H1 (cell line): ENCODE measurements at regions of chr6 and their contacts with region 1.

Region 1: GRCh38 chr6:32413427-32414047 is 6.6 kb upstream of the BTNL2 start:
- DNase-seq: peak; percentile 86 to 91
- H3K4me3 ChIP-seq: no peak overlapping the region
- H3K27ac ChIP-seq: no peak overlapping the region
- H3K4me1 ChIP-seq: no peaks in the 10 kb centered on the region
- H3K27me3 ChIP-seq: peaks cover 0 to 12% (median 1%) of the 10 kb centered on the region in 4 experiments; a peak in 1 of 7 replicates
- CTCF ChIP-seq: peak; percentile 89 to 97 (median 94)
- EP300 ChIP-seq: no peak
- POLR2A ChIP-seq: no peak
- RAD21 ChIP-seq: peak; percentile 91 to 94

Region 2: DNA sequence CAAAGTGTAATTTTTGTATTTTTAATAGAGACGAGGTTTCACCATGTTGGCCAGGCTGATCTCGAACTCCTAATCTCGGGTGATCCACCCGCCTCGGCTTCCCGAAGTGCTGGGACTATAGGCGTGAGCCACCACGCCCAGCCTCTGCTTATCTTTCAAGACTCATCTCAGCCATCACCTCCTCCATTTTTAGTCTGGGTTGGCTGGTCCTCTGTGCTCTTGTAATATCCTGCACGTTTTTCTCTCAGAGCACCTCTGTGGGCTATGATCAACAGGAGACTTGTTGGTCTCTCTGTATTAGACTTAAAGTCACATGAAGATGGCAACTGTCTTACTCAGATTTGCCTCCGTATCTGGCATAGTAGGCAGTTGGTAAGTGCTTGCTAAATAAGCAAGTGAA is 197.3 kb before region 1 on chr6:
- CTCF ChIA-PET with region 1: no interaction called
- POLR2A ChIA-PET with region 1: no interaction called
- DNase-seq: no peak
- H3K4me3 ChIP-seq: no peak overlapping the region
- H3K27ac ChIP-seq: no peak overlapping the region
- H3K4me1 ChIP-seq: no peaks in the 10 kb centered on the region
- H3K27me3 ChIP-seq: no peaks in the 10 kb centered on the region
- CTCF ChIP-seq: no peak
- EP300 ChIP-seq: no peak
- POLR2A ChIP-seq: no peak
- RAD21 ChIP-seq: no peak

Region 3: GRCh38 chr6:32244946-32245398 is 168.6 kb before region 1 on chr6:
- CTCF ChIA-PET with region 1: interaction called, 51 read pairs
- POLR2A ChIA-PET with region 1: no interaction called
- DNase-seq: peak; percentile 17 to 93
- H3K4me3 ChIP-seq: peak overlapping the region in 1 of 4 experiments; percentile 37; a peak in 2 of 8 replicates
- H3K27ac ChIP-seq: no peak overlapping the region
- H3K4me1 ChIP-seq: no peaks in the 10 kb centered on the region
- H3K27me3 ChIP-seq: no peaks in the 10 kb centered on the region
- CTCF ChIP-seq: peak; percentile 85 to 91 (median 90)
- EP300 ChIP-seq: no peak
- POLR2A ChIP-seq: no peak
- RAD21 ChIP-seq: peak; percentile 87 to 90

Region 4: DNA sequence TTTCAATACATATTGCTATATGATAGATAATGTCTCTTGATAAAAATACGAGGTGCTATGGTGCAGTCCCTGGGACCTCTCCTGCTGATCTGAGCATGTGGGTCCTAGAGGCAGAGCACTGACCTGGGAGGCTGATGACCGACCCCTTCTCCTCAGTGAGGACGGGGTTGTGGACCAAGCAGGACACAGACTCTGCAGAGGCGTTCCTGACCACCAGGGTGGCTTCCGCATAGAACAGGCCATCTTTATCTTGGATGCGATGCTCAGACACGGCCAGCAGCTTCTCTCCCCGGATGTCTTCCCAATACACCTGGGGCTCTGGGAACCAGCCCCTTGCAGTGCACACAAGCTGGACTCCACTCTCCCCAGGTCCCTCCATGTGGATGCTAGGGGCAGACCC is 10.7 kb before region 1 on chr6:
- CTCF ChIA-PET with region 1: interaction called, 43 read pairs
- POLR2A ChIA-PET with region 1: no interaction called
- DNase-seq: no peak
- H3K4me3 ChIP-seq: no peak overlapping the region
- H3K27ac ChIP-seq: no peak overlapping the region
- H3K4me1 ChIP-seq: peaks cover 0 to 6% (median 2%) of the 10 kb centered on the region in 4 experiments; a peak in 3 of 7 replicates
- H3K27me3 ChIP-seq: no peaks in the 10 kb centered on the region
- CTCF ChIP-seq: peak; percentile 1 to 23 (median 10); a peak in 3 of 4 replicates
- EP300 ChIP-seq: no peak
- POLR2A ChIP-seq: no peak
- RAD21 ChIP-seq: no peak

Region 5: GRCh38 chr6:32692019-32692418 is 278.5 kb after region 1 on chr6:
- CTCF ChIA-PET with region 1: interaction called, 26 read pairs
- POLR2A ChIA-PET with region 1: no interaction called
- DNase-seq: peak in 1 of 2 experiments; percentile 2
- H3K4me3 ChIP-seq: no peak overlapping the region
- H3K27ac ChIP-seq: no peak overlapping the region
- H3K4me1 ChIP-seq: no peaks in the 10 kb centered on the region
- H3K27me3 ChIP-seq: no peaks in the 10 kb centered on the region
- CTCF ChIP-seq: peak; percentile 49 to 79 (median 72)
- EP300 ChIP-seq: no peak
- POLR2A ChIP-seq: no peak
- RAD21 ChIP-seq: peak; percentile 89 to 94

Region 6: GRCh38 chr6:32713241-32713640 is 299.7 kb after region 1 on chr6:
- CTCF ChIA-PET with region 1: interaction called, 18 read pairs
- POLR2A ChIA-PET with region 1: no interaction called
- DNase-seq: no peak
- H3K4me3 ChIP-seq: no peak overlapping the region
- H3K27ac ChIP-seq: no peak overlapping the region
- H3K4me1 ChIP-seq: no peaks in the 10 kb centered on the region
- H3K27me3 ChIP-seq: no peaks in the 10 kb centered on the region
- CTCF ChIP-seq: no peak
- EP300 ChIP-seq: no peak
- POLR2A ChIP-seq: no peak
- RAD21 ChIP-seq: no peak

Region 7: DNA sequence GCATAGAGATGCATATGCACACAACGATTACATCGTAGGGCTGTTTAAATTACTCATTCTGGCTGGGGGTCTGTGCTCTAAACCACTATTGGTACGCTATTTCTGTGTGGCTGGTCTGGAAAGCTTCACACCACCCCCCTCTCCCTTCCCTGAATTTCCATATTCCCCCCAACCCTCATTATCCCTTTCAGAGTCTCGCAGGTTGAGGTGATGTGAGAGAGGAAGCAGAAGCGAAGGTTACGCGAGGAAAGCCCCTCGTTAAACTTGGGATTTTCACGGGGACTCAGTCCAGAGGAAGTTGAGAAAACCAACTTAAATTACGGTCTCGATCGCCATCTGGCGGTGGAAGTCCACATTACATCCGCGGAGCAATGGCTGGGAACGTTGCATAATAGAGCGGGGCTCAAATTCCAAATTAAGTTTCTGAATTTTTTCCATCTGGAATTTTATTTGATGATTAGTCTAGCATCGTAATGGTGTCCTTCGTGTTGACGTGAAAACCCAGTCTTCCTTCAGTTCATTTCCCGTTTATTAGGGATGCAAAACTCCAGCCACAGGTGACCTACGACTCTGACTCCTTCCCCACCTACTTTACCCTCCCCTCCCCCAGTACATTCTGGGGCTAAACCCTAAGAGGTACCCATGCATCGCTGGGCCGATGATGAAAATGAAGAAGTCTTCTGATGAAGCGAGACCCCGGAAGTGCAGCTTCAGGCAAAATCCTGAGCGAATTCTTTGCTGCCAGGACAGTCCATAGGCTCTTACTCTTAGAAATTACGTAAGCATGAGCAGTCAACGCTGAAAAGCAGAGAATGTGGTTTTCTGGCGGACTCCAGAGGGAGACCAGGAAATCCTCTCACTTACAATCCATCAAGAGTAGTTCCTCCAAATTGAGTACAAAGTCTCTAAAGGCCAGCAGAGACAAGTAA is 383.6 kb after region 1 on chr6:
- CTCF ChIA-PET with region 1: interaction called, 25 read pairs
- POLR2A ChIA-PET with region 1: no interaction called
- DNase-seq: peak; percentile 19 to 97
- H3K4me3 ChIP-seq: peak overlapping the region in 3 of 4 experiments; percentile 7 to 48 (median 24); a peak in 4 of 8 replicates
- H3K27ac ChIP-seq: no peak overlapping the region
- H3K4me1 ChIP-seq: peaks cover 0 to 3% (median 0%) of the 10 kb centered on the region in 4 experiments; a peak in 2 of 7 replicates
- H3K27me3 ChIP-seq: peaks cover 0 to 1% (median 0%) of the 10 kb centered on the region in 4 experiments; a peak in 1 of 7 replicates
- CTCF ChIP-seq: peak; percentile 69 to 83 (median 75)
- EP300 ChIP-seq: no peak
- POLR2A ChIP-seq: no peak
- RAD21 ChIP-seq: peak; percentile 82 to 89